ENCODE measurements at regions of chr3 and their contacts with region 1.

Region 1: GRCh38 chr3:67083277-67083676 is 85.2 kb downstream of the KBTBD8 start:
- DNase-seq: peak; percentile 53 to 75 (median 74)
- H3K4me3 ChIP-seq: peak overlapping the region in 1 of 2 donors; percentile 22
- H3K4me3 Mint-ChIP-seq: peak overlapping the region; percentile 52 to 87 (median 79)
- H3K27ac ChIP-seq: peak overlapping the region; percentile 7
- H3K27ac Mint-ChIP-seq: peak overlapping the region; percentile 37 to 98 (median 80)
- H3K4me1 ChIP-seq: peaks cover 23% of the 10 kb centered on the region
- H3K4me1 Mint-ChIP-seq: peaks cover 21 to 41% (median 27%) of the 10 kb centered on the region in 4 donors
- H3K27me3 ChIP-seq: no peaks in the 10 kb centered on the region
- H3K27me3 Mint-ChIP-seq: peaks cover 0 to 4% of the 10 kb centered on the region in 2 donors

Region 2: GRCh38 chr3:66220602-66221377 is 862.5 kb before region 1 on chr3 and contains the start of gene SLC25A26:
- CTCF ChIA-PET with region 1: no interaction called
- POLR2A ChIA-PET with region 1: no interaction called
- intact Hi-C with region 1: loop called (anchors 2 kb)
- DNase-seq: peak; percentile 96 to 100 (median 98)
- H3K4me3 ChIP-seq: peak within 1 kb of the TSS; percentile 67 to 82
- H3K4me3 Mint-ChIP-seq: peak within 1 kb of the TSS; percentile 87 to 99 (median 92)
- H3K27ac ChIP-seq: peak within 1 kb of the TSS; percentile 73
- H3K27ac Mint-ChIP-seq: peak within 1 kb of the TSS; percentile 76 to 99 (median 91)
- H3K4me1 ChIP-seq: peaks cover 15% of the 10 kb centered on the region
- H3K4me1 Mint-ChIP-seq: peaks cover 16 to 44% (median 32%) of the 10 kb centered on the region in 4 donors
- H3K27me3 ChIP-seq: no peaks in the 10 kb centered on the region
- H3K27me3 Mint-ChIP-seq: no peaks in the 10 kb centered on the region
- total RNA-seq, gene SLC25A26: 18.9 to 21.1 TPM

Region 3: DNA sequence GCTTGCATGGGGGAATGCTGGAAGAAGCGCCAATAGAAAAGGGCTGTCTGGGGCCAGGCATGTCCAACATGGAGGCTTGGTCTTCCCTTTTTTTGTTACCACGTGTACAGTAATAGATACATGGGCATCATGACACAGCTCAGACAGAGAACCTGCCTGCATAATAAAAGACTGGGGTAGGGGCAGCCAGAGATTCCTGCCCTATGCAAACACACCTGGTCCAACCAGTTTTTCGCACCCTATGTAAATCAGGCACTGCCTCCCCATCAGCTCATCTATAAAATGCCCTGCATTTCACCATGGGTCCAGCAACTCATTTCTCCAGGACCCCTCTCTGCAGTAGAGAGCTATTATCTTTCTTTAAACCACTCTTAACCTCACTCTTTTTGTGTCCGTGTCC is 180.6 kb after region 1 on chr3:
- CTCF ChIA-PET with region 1: no interaction called
- POLR2A ChIA-PET with region 1: no interaction called
- intact Hi-C with region 1: no loop called
- DNase-seq: no peak
- H3K4me3 ChIP-seq: no peak overlapping the region
- H3K4me3 Mint-ChIP-seq: no peak overlapping the region
- H3K27ac ChIP-seq: no peak overlapping the region
- H3K27ac Mint-ChIP-seq: no peak overlapping the region
- H3K4me1 ChIP-seq: no peaks in the 10 kb centered on the region
- H3K4me1 Mint-ChIP-seq: no peaks in the 10 kb centered on the region
- H3K27me3 ChIP-seq: no peaks in the 10 kb centered on the region
- H3K27me3 Mint-ChIP-seq: no peaks in the 10 kb centered on the region

Measured in CD4-positive, alpha-beta memory T cell (primary cell).